ENCODE measurements at regions of chr20 and their contacts with region 1.

Region 1: DNA sequence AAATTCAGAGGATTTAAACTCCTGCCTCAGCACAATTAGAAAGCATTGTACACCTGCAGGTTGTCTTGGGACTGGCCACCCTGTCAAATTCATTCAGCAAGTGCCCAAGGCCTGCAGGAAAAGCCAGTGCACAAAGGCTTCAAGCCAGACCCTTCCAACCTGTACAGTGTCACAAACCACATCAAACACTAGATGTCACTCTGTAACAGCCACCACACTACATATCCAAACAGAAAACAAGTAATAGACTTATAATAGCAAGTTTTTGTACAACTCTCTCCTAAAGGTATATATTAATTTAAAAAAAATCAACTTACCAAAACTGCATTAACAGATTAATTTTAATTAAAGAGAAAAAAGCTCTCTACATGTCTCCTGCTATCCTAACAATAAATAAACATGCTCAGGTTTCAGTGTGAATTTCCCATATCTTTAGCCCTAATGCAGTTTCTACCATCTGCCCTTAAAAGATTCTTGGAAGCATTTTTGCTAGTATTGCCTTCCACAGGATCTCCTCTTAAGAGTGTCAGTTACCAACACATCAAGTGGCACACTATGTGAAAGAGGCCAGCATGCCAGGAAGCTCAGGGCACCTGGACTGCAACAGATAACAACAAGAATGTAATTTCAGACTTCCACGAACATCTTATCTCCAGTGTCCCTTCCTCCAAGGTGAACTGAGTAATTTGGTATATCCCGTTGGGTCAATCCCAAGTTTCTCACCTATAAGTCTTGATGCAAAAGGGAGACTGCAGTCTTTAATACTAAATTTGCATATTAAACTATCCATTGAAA is 47.5 kb downstream of the RALGAPA2 start:
- DNase-seq: no peak
- H3K4me3 Mint-ChIP-seq: no peak overlapping the region
- H3K27ac Mint-ChIP-seq: no peak overlapping the region
- H3K4me1 Mint-ChIP-seq: peaks cover 15% of the 10 kb centered on the region
- H3K27me3 Mint-ChIP-seq: no peaks in the 10 kb centered on the region

Region 2: DNA sequence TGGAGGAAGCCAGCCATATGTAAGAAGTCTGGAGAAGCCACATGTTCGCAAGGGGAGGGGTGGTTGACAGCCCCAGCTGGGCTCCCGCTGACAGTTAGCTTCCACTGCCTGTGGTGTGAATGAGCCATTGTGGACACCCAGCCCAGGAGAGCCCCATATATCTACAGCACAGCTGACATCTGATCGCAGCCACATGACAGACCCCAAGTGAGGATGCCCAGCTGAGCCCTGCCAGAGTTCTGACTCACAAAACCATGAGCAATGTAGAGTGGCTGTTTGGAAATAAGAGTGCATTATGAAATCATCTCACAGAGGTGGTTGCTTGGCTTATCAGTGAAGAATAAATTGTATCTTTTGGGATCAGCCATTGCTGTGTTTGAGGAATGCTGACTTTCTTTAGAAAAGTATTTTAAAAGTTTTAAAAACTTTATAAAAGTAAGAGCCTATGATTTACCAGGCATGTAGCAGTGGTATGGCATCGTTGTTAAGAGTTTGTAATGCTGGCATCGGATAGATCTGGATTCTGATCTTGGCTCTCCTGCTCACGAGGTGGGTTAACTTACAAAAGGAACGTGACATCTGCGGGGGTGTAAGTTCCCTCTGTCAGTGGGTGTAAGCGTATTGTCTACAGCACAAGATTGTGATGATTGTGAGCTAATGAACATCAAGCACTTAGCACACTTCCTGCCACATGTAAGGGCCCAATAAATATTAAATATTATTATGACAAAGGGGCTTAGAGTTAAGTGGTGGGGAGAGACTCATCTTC is 588.5 kb before region 1 on chr20:
- intact Hi-C with region 1: no loop called
- DNase-seq: no peak
- H3K4me3 Mint-ChIP-seq: no peak overlapping the region
- H3K27ac Mint-ChIP-seq: no peak overlapping the region
- H3K4me1 Mint-ChIP-seq: no peaks in the 10 kb centered on the region
- H3K27me3 Mint-ChIP-seq: peaks cover 20% of the 10 kb centered on the region

Region 3: GRCh38 chr20:20649945-20650344 is 15.0 kb before region 1 on chr20:
- intact Hi-C with region 1: no loop called
- DNase-seq: no peak
- H3K4me3 Mint-ChIP-seq: no peak overlapping the region
- H3K27ac Mint-ChIP-seq: no peak overlapping the region
- H3K4me1 Mint-ChIP-seq: no peaks in the 10 kb centered on the region
- H3K27me3 Mint-ChIP-seq: no peaks in the 10 kb centered on the region

Region 4: GRCh38 chr20:20824924-20825584 is 160.1 kb after region 1 on chr20:
- intact Hi-C with region 1: loop called (anchors 1 kb)
- DNase-seq: peak; percentile 36
- H3K4me3 Mint-ChIP-seq: no peak overlapping the region
- H3K27ac Mint-ChIP-seq: no peak overlapping the region
- H3K4me1 Mint-ChIP-seq: no peaks in the 10 kb centered on the region
- H3K27me3 Mint-ChIP-seq: peaks cover 2% of the 10 kb centered on the region